ENCODE measurements at regions of chr2 and their contacts with region 1.

Region 1: DNA sequence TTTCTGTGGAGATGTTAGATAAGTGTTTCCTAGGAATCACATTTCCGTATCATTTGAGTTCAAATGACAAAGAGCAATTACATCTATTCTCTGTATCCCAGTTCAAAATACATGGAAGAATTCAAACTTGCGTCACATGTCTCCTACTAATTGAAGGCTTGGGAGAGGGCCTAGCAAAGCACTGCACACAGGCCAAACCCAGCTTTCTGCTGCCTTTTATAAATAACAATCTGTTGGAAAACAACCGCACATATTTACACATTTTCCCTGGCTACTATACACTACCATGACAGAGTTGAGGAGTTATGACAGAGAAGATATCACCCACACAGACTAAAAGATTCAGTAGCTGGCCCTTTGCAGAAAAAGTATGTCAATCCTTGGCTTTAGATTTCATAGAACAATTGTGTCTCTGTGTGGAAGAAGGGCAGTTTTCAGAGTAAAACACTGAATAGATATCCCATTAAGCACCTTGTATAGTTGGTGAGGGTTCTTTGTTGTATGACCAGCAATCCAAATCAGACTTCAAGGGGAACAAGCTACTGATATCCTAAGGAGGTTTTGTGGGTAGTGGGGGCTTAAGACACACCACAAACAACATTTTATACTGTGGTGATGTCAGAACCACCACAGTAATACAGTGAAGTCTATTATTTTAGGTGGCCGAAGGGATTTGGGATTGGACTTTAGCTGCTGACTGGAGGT is 861.3 kb downstream of the CCDC85A start:
- DNase-seq: no peak

Region 2: DNA sequence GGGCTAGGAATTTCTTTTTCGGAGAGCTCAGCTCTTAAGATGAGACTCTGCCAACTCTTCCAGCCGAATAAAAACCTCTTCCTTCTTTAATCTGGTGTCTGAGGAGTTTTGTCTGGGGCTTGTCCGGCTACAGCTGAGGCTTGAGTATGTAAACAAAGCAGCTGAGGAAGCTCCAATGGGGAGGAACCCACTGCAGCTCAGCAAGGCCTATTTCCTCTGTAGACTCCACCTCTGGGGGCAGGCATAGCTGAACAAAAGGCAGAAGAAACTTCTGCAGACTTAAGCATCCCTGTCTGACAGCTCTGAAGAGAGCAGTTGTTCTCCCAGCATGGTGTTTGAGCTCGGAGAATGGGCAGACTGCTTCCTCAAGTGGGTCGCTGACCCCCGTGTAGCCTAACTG is 22.6 kb before region 1 on chr2:
- intact Hi-C with region 1: loop called in 1 of 2 experiments (anchors 2 kb)
- DNase-seq: no peak

Region 3: DNA sequence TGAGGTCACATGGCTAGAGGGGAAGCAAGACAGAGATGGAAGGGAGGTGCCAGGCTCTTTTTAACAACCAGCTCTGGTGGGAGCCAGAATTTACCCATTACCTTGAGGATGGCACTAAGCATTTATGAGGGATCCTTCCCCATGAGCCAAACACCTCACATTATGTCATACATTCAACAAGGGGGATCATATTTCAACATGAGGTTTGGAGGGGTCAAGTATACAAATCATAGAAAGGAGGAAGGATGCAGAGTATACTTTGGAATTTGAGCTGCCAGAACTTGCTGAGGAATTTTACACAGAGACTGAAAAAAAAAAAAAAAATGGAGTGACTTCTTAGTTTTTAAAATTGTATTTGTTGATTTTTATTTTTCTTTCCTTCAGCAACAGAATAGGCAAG is 30.1 kb after region 1 on chr2:
- intact Hi-C with region 1: no loop called
- DNase-seq: no peak

Region 4: GRCh38 chr2:58788402-58788801 is 1743.3 kb after region 1 on chr2:
- intact Hi-C with region 1: no loop called
- DNase-seq: no peak